CD4-positive, alpha-beta T cell (primary cell): ENCODE measurements at regions of chr12 and their contacts with region 1.

Region 1: DNA sequence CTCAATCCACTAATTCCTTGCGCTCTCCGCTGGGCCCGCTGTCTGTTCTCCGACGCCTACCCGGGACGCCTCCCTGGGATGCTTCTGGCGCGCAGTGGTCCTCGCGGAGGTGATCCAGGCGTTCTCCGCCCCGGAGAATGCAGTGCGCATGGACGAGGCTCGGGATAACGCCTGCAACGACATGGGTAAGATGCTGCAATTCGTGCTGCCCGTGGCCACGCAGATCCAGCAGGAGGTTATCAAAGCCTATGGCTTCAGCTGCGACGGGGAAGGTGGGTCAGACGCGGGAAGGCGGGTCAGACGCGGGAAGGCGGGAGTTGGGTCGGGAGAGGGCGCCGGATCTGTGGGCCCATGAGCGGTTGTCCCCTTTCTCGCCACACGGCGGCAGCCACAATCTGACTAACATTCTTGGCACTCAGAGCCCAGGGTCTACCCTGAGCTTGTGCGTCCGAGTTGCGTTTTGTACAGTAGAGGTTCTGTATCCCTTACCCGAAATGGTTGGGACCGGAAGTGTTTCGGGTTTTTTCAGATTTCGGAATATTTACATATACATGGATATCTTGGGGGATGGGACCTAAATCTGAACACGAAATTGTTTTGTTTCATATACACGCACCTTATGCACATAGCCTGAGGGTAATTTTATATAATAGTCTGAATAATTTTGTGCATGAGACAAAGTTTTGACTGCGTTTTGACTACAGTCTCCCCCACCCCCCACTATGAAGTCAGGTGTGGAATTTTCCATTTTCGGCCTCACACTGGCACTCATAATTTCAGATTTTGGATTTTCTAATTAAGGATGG is 762 bp downstream of the C12orf57 start:
- DNase-seq: peak; percentile 75 to 94 (median 84)
- ATAC-seq: peak; percentile 51
- H3K4me3 ChIP-seq: peak overlapping the region; percentile 65
- H3K4me3 Mint-ChIP-seq: peak overlapping the region; percentile 97
- H3K27ac ChIP-seq: peak overlapping the region; percentile 96 to 98
- H3K27ac Mint-ChIP-seq: peak overlapping the region; percentile 97
- H3K4me1 ChIP-seq: peaks cover 74% of the 10 kb centered on the region
- H3K4me1 Mint-ChIP-seq: peaks cover 73% of the 10 kb centered on the region
- H3K27me3 ChIP-seq: no peaks in the 10 kb centered on the region
- H3K27me3 Mint-ChIP-seq: no peaks in the 10 kb centered on the region
- CTCF ChIP-seq: peak; percentile 92

Region 2: DNA sequence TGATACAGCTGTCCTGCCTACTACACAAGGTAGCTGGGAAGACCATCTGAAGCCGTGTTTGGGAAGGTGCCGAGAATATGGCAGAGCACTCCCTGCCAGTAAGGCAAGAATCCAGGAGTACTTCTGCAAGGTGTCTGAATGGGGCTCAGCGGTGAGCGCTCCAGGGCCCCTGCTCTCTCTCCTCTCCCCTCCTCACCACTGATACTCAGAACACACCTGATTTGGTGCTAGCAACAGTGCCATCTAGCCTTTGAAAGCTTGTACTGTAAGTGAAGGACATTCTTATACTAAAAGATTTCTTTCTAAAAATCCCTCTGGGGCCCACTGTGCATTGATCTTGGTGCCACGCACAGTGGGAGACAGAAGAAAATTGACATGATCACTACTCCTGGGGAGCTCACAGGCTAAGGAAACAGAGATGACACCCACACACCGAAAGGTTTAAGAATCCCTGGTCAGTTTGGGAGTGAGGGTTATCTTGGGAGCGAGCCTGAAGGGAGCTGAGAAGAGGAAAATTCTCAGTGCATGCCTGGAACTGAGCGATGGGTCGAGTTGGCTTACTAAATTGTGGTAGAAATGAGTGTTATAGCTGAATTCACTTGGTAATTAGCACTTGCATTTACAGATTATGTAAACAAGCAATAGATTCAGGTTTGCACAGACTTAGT is 1295.8 kb before region 1 on chr12:
- CTCF ChIA-PET with region 1: no interaction called
- POLR2A ChIA-PET with region 1: no interaction called
- intact Hi-C with region 1: no loop called
- DNase-seq: no peak
- ATAC-seq: no peak
- H3K4me3 ChIP-seq: no peak overlapping the region
- H3K4me3 Mint-ChIP-seq: no peak overlapping the region
- H3K27ac ChIP-seq: no peak overlapping the region
- H3K27ac Mint-ChIP-seq: no peak overlapping the region
- H3K4me1 ChIP-seq: no peaks in the 10 kb centered on the region
- H3K4me1 Mint-ChIP-seq: no peaks in the 10 kb centered on the region
- H3K27me3 ChIP-seq: no peaks in the 10 kb centered on the region
- H3K27me3 Mint-ChIP-seq: peaks cover 38% of the 10 kb centered on the region
- CTCF ChIP-seq: no peak

Region 3: DNA sequence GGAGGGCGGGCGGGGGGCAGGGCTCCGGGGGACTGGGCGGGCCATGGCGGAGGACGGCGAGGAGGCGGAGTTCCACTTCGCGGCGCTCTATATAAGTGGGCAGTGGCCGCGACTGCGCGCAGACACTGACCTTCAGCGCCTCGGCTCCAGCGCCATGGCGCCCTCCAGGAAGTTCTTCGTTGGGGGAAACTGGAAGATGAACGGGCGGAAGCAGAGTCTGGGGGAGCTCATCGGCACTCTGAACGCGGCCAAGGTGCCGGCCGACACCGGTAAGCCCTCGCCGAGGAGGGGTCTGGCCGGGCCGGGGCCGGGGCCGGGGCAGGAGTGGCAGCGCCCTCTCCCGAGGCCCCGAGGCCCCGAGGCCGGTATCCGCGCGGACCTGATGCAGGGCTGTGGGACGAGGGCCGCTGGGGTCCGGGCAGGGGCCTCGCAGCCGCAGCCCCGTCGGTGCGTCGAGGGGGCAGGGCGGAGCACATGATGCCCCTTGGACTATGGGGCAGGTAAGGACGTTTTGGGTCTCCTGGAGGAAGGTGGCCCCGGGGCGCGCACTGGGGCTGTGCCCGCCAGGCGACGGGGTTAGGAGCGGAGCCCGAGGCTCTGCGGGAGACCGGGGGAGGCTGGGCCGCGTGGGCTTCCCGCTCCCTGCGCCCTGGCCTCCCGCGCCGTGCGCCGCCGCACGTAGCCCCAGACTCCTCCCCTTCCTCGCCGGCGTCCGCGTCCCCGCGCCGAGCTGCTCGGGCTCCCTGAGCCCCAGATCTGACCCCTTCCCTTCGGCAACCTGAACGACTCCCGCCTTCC is 77.0 kb before region 1 on chr12 and contains the start of gene TPI1:
- CTCF ChIA-PET with region 1: interaction called, 33 read pairs
- POLR2A ChIA-PET with region 1: interaction called, 74 read pairs
- intact Hi-C with region 1: loop called in 1 of 2 experiments (anchors 5 kb)
- DNase-seq: peak; percentile 55 to 88 (median 72)
- ATAC-seq: peak; percentile 64
- H3K4me3 ChIP-seq: peak within 1 kb of the TSS; percentile 68
- H3K4me3 Mint-ChIP-seq: peak within 1 kb of the TSS; percentile 94
- H3K27ac ChIP-seq: peak within 1 kb of the TSS; percentile 73 to 78
- H3K27ac Mint-ChIP-seq: peak within 1 kb of the TSS; percentile 80
- H3K4me1 ChIP-seq: peaks cover 53% of the 10 kb centered on the region
- H3K4me1 Mint-ChIP-seq: peaks cover 56% of the 10 kb centered on the region
- H3K27me3 ChIP-seq: no peaks in the 10 kb centered on the region
- H3K27me3 Mint-ChIP-seq: no peaks in the 10 kb centered on the region
- CTCF ChIP-seq: no peak
- total RNA-seq, gene TPI1: 46.8 to 48.7 TPM

Region 4: GRCh38 chr12:6884539-6884938 is 60.0 kb before region 1 on chr12:
- CTCF ChIA-PET with region 1: no interaction called
- POLR2A ChIA-PET with region 1: no interaction called
- intact Hi-C with region 1: no loop called
- DNase-seq: no peak
- ATAC-seq: no peak
- H3K4me3 ChIP-seq: no peak overlapping the region
- H3K4me3 Mint-ChIP-seq: no peak overlapping the region
- H3K27ac ChIP-seq: no peak overlapping the region
- H3K27ac Mint-ChIP-seq: no peak overlapping the region
- H3K4me1 ChIP-seq: no peaks in the 10 kb centered on the region
- H3K4me1 Mint-ChIP-seq: no peaks in the 10 kb centered on the region
- H3K27me3 ChIP-seq: no peaks in the 10 kb centered on the region
- H3K27me3 Mint-ChIP-seq: no peaks in the 10 kb centered on the region
- CTCF ChIP-seq: no peak

Region 5: DNA sequence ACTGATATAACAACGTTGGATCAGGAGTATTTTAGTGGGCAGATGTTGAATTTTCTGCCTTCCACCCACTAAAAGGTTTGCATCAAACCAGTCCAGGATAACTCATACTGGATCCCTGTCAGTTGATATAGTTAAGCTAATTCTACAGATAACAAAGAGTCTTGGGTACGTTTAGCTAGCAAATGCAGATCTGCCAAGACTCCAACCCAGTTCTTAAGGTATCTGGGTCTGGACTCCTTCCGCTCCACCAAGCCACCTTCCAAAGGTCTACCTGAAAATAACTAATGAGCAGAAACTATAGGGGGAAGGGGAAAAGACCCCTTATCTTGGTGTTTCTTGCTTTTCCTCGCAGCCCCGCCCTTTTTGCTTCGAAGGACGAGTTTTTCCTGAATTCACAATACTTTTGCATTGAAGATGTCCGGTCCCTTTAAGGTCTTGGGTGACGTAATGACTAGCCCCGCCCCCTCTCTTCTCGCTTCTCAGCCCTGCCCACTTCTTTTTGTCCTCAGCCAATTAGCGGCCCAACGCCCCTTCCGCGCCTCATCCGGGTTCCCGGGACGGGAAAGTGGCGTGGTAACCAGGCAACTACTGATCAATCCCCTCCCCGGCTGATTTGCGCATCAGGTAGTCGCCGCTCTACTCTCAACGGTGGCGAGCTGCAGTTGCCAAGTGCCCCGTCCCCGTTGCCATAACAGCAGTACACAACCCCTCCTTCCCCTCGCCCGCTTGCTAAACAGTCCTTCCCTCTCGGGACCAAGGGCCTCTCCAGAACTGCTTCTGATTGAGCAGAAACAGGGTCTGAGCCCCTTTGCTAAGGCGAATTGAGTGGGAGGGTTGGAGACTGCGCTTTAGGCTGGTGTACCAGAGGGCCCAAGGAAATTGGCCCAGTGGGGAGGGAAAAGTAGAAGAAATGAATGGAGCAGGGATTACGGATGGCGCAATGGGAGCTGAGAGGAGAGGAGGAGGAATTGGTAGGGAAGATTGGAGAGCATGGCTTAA is 40.0 kb before region 1 on chr12 and contains the start of gene LRRC23:
- CTCF ChIA-PET with region 1: interaction called, 6 read pairs
- POLR2A ChIA-PET with region 1: interaction called, 19 read pairs
- intact Hi-C with region 1: no loop called
- DNase-seq: peak; percentile 92 to 99 (median 96)
- ATAC-seq: peak; percentile 96
- H3K4me3 ChIP-seq: peak within 1 kb of the TSS; percentile 60
- H3K4me3 Mint-ChIP-seq: peak within 1 kb of the TSS; percentile 22
- H3K27ac ChIP-seq: peak within 1 kb of the TSS; percentile 81 to 94
- H3K27ac Mint-ChIP-seq: no peak within 1 kb of the TSS
- H3K4me1 ChIP-seq: peaks cover 21% of the 10 kb centered on the region
- H3K4me1 Mint-ChIP-seq: no peaks in the 10 kb centered on the region
- H3K27me3 ChIP-seq: no peaks in the 10 kb centered on the region
- H3K27me3 Mint-ChIP-seq: no peaks in the 10 kb centered on the region
- CTCF ChIP-seq: no peak
- total RNA-seq, gene LRRC23: 3.2 to 4.7 TPM

Region 6: DNA sequence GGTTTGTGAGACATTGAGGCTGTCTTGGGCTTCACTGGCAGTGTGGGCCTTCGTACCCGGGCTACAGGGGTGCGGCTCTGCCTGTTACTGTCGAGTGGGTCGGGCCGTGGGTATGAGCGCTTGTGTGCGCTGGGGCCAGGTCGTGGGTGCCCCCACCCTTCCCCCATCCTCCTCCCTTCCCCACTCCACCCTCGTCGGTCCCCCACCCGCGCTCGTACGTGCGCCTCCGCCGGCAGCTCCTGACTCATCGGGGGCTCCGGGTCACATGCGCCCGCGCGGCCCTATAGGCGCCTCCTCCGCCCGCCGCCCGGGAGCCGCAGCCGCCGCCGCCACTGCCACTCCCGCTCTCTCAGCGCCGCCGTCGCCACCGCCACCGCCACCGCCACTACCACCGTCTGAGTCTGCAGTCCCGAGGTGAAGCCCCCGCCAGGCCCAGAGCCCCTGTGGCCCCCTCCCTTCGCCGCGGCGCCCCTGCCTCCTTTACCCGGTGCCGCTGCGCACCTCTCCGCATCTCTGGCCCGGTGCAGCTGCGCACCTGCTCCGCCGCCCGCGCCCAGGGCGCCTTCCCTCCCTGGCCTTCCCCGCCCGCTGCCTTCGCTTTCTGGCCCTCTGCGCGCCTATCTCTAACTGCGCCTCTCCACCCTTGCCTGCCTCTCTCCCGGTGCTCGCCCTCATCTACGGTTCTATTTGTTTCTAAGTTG is 30.2 kb before region 1 on chr12 and contains the start of gene ENO2:
- CTCF ChIA-PET with region 1: interaction called, 3 read pairs
- POLR2A ChIA-PET with region 1: interaction called, 35 read pairs
- intact Hi-C with region 1: no loop called
- DNase-seq: peak; percentile 72 to 93 (median 86)
- ATAC-seq: peak; percentile 93
- H3K4me3 ChIP-seq: peak within 1 kb of the TSS; percentile 65
- H3K4me3 Mint-ChIP-seq: peak within 1 kb of the TSS; percentile 94
- H3K27ac ChIP-seq: peak within 1 kb of the TSS; percentile 84 to 90
- H3K27ac Mint-ChIP-seq: peak within 1 kb of the TSS; percentile 82
- H3K4me1 ChIP-seq: peaks cover 32% of the 10 kb centered on the region
- H3K4me1 Mint-ChIP-seq: peaks cover 31% of the 10 kb centered on the region
- H3K27me3 ChIP-seq: no peaks in the 10 kb centered on the region
- H3K27me3 Mint-ChIP-seq: no peaks in the 10 kb centered on the region
- CTCF ChIP-seq: no peak
- total RNA-seq, gene ENO2: 85.6 to 103 TPM

Region 7: DNA sequence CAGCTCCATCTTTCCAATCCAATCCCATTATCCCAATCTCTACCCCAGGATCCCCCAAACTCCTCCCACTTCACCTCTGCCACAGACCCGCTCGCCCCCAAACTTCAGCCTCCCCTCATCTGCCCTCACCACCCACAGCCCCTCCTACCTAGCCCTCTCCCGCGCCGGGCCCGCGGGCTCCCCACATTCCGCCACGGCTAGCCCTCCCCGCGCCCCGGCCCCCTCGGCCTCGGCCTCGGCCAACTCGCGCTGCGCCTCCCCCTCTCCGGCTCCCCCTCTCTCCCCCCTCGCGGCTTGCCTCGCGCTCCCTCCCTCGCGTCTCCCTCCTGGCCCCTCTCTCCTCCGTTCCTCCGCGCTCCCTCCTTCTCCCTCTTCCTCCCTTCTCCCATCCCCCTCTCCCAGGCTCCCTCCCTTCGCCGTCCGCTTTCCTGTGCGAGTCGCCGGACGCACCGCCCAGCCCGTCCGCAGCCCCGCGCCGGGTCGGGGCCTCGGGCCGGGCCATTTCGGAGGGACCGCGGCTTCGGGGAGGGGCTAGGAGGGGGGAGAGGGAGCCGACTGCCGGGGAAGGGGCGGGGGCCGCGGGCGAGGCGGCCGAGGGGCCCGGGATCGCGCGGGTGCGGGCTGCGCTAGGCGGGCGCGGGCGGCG is 17.1 kb before region 1 on chr12 and contains the start of gene ATN1:
- CTCF ChIA-PET with region 1: interaction called, 18 read pairs
- POLR2A ChIA-PET with region 1: interaction called, 39 read pairs
- intact Hi-C with region 1: loop called in 1 of 2 experiments (anchors 2 kb)
- DNase-seq: peak in 7 of 14 experiments; percentile 33 to 69 (median 54)
- ATAC-seq: peak; percentile 41
- H3K4me3 ChIP-seq: peak within 1 kb of the TSS; percentile 65
- H3K4me3 Mint-ChIP-seq: peak within 1 kb of the TSS; percentile 95
- H3K27ac ChIP-seq: peak within 1 kb of the TSS; percentile 79 to 82
- H3K27ac Mint-ChIP-seq: peak within 1 kb of the TSS; percentile 87
- H3K4me1 ChIP-seq: peaks cover 49% of the 10 kb centered on the region
- H3K4me1 Mint-ChIP-seq: peaks cover 56% of the 10 kb centered on the region
- H3K27me3 ChIP-seq: no peaks in the 10 kb centered on the region
- H3K27me3 Mint-ChIP-seq: no peaks in the 10 kb centered on the region
- CTCF ChIP-seq: no peak
- total RNA-seq, gene ATN1: 28.7 to 29.6 TPM

Region 8: GRCh38 chr12:6965026-6965661 is 20.6 kb after region 1 on chr12:
- CTCF ChIA-PET with region 1: interaction called, 324 read pairs
- POLR2A ChIA-PET with region 1: interaction called, 963 read pairs
- intact Hi-C with region 1: loop called (anchors 1 kb)
- DNase-seq: peak; percentile 83 to 96 (median 86)
- ATAC-seq: peak; percentile 50
- H3K4me3 ChIP-seq: no peak overlapping the region
- H3K4me3 Mint-ChIP-seq: peak overlapping the region; percentile 79
- H3K27ac ChIP-seq: peak overlapping the region; percentile 38 to 39
- H3K27ac Mint-ChIP-seq: peak overlapping the region; percentile 90
- H3K4me1 ChIP-seq: peaks cover 70% of the 10 kb centered on the region
- H3K4me1 Mint-ChIP-seq: peaks cover 58% of the 10 kb centered on the region
- H3K27me3 ChIP-seq: no peaks in the 10 kb centered on the region
- H3K27me3 Mint-ChIP-seq: no peaks in the 10 kb centered on the region
- CTCF ChIP-seq: peak; percentile 94

Region 9: DNA sequence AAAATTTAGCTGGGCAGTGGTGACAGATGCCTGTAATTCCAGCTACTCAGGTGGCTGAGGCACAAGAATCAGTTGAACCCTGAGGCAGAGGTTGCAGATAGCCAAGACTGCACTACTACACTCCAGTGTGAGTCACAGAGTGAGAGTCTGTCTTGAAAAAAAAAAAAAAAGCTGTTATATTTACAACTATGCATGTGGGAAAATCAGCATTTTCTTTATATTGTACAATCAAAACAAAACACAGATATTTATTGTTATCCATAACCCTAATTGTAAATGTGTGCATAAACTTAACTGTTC is 135.2 kb after region 1 on chr12:
- CTCF ChIA-PET with region 1: no interaction called
- POLR2A ChIA-PET with region 1: no interaction called
- intact Hi-C with region 1: no loop called
- DNase-seq: no peak
- ATAC-seq: no peak
- H3K4me3 ChIP-seq: no peak overlapping the region
- H3K4me3 Mint-ChIP-seq: no peak overlapping the region
- H3K27ac ChIP-seq: no peak overlapping the region
- H3K27ac Mint-ChIP-seq: no peak overlapping the region
- H3K4me1 ChIP-seq: no peaks in the 10 kb centered on the region
- H3K4me1 Mint-ChIP-seq: no peaks in the 10 kb centered on the region
- H3K27me3 ChIP-seq: no peaks in the 10 kb centered on the region
- H3K27me3 Mint-ChIP-seq: no peaks in the 10 kb centered on the region
- CTCF ChIP-seq: no peak

Region 10: GRCh38 chr12:7108796-7109571 is 164.4 kb after region 1 on chr12 and contains the start of gene C1RL:
- CTCF ChIA-PET with region 1: interaction called, 9 read pairs
- POLR2A ChIA-PET with region 1: interaction called, 56 read pairs
- intact Hi-C with region 1: no loop called
- DNase-seq: peak; percentile 55 to 85 (median 76)
- ATAC-seq: peak; percentile 48
- H3K4me3 ChIP-seq: peak within 1 kb of the TSS; percentile 70
- H3K4me3 Mint-ChIP-seq: peak within 1 kb of the TSS; percentile 93
- H3K27ac ChIP-seq: peak within 1 kb of the TSS; percentile 79 to 80
- H3K27ac Mint-ChIP-seq: peak within 1 kb of the TSS; percentile 93
- H3K4me1 ChIP-seq: peaks cover 43% of the 10 kb centered on the region
- H3K4me1 Mint-ChIP-seq: peaks cover 46% of the 10 kb centered on the region
- H3K27me3 ChIP-seq: no peaks in the 10 kb centered on the region
- H3K27me3 Mint-ChIP-seq: no peaks in the 10 kb centered on the region
- CTCF ChIP-seq: peak; percentile 95
- total RNA-seq, gene C1RL: 12.2 to 14.1 TPM